ENCODE measurements at regions of chr9 and their contacts with region 1.

Region 1: GRCh38 chr9:97598461-97599288 is 34.5 kb downstream of the TSTD2 start:
- DNase-seq: peak; percentile 61
- ATAC-seq: peak; percentile 98
- H3K4me3 ChIP-seq: 0 out of 2 replicates have a peak overlapping the region, but pooled peaks have one; percentile 15
- H3K27ac ChIP-seq: no peak overlapping the region
- H3K4me1 ChIP-seq: peaks cover 7% of the 10 kb centered on the region; the same call in 1 of the 2 replicates
- H3K27me3 ChIP-seq: no peaks in the 10 kb centered on the region
- CTCF ChIP-seq: peak; percentile 77 to 94 (median 88)
- EP300 ChIP-seq: no peak
- POLR2A ChIP-seq: no peak
- RAD21 ChIP-seq: peak; percentile 86

Region 2: DNA sequence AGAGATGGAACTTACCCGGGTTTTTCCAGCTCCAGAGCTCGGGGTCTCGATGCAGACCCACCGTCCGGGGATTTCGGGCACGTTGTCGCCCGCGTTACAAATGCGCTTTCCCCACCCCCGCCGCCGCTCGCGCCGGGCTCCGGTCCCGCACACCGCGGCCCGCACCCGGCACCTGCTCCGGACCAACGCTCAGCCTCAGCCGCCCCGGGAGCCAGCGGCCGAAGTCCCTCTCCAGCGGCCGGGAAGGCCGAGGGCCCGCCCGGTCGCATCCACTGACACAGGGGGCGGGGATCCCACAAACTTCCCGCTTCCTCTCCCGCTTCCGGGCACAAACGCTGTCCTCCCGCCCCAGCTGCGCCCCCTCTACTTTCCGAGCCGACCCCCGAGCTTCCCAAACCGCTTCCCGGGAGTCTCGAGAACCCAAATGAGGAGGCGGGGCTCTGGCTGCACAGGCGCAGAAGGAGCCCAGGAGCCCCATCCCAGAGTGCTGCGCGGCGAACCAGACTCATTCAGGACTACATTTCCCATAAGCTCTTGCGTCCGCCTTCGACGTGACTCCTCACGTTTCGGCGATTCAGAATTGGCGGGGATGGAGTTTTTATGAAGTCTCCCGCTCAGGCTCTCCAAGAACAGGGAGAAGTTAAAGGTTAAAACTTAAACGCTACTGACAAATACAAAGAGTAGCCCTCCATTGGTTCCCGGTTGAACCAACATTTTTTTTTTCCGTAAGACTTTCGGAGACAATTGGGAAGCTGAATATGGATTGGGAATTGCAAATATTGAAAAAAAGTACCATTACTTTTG is 744.4 kb before region 1 on chr9 and contains the start of gene ZNF782:
- CTCF ChIA-PET with region 1: interaction called, 16 read pairs
- POLR2A ChIA-PET with region 1: no interaction called
- RAD21 ChIA-PET with region 1: interaction called, 7 read pairs
- SMC1A ChIA-PET with region 1: interaction called, 4 read pairs
- in situ Hi-C with region 1: loop called (anchors 25 kb)
- intact Hi-C with region 1: loop called (anchors 5 kb)
- DNase-seq: peak; percentile 60
- ATAC-seq: peak; percentile 96
- H3K4me3 ChIP-seq: peak within 1 kb of the TSS; percentile 83
- H3K27ac ChIP-seq: peak within 1 kb of the TSS; percentile 45
- H3K4me1 ChIP-seq: 0 out of 2 replicates have a peak, but pooled peaks cover 7% of the 10 kb centered on the region
- H3K27me3 ChIP-seq: no peaks in the 10 kb centered on the region
- CTCF ChIP-seq: no peak
- EP300 ChIP-seq: no peak
- POLR2A ChIP-seq: peak; percentile 58; the same call in 1 of the 2 replicates
- RAD21 ChIP-seq: no peak
- polyA plus RNA-seq, gene ZNF782: 0.55 to 0.82 TPM

Region 3: DNA sequence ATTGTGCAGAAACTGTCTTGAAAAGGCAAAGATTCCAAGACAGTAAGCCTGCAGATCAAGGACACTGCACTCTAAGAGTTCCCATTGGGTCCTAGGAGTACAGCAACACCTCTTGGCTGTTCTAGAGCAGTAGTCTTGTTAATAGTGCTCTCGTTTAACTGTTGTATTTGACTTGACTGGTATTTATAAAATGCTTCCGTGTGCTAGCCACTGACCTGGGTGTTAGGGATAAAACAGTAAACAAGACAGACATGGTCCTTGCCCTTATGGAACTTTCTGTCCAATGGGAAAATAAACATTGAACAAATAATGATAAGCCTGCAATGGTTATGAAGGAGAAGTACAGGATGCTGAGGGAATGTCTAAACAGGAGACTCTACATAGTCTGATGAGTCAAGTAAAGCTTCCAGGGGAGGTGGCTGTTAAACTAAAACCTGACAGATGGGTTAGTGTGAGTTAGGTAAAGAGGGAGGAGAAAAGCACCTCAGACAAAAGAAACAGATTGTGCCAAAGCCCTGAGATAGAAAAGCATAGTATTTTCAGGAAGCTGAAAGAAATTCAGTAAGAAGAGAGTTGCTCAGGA is 153.5 kb before region 1 on chr9:
- CTCF ChIA-PET with region 1: interaction called, 11 read pairs
- POLR2A ChIA-PET with region 1: no interaction called
- RAD21 ChIA-PET with region 1: interaction called, 3 read pairs
- SMC1A ChIA-PET with region 1: interaction called, 5 read pairs
- in situ Hi-C with region 1: no loop called
- intact Hi-C with region 1: no loop called
- DNase-seq: no peak
- ATAC-seq: no peak
- H3K4me3 ChIP-seq: no peak overlapping the region
- H3K27ac ChIP-seq: no peak overlapping the region
- H3K4me1 ChIP-seq: no peaks in the 10 kb centered on the region
- H3K27me3 ChIP-seq: no peaks in the 10 kb centered on the region
- CTCF ChIP-seq: no peak
- EP300 ChIP-seq: no peak
- POLR2A ChIP-seq: no peak
- RAD21 ChIP-seq: no peak

Region 4: GRCh38 chr9:97480749-97481148 is 117.9 kb before region 1 on chr9:
- CTCF ChIA-PET with region 1: interaction called, 23 read pairs
- POLR2A ChIA-PET with region 1: no interaction called
- RAD21 ChIA-PET with region 1: interaction called, 5 read pairs
- SMC1A ChIA-PET with region 1: interaction called, 377 read pairs
- in situ Hi-C with region 1: no loop called
- intact Hi-C with region 1: no loop called
- DNase-seq: no peak
- ATAC-seq: no peak
- H3K4me3 ChIP-seq: no peak overlapping the region
- H3K27ac ChIP-seq: no peak overlapping the region
- H3K4me1 ChIP-seq: no peaks in the 10 kb centered on the region
- H3K27me3 ChIP-seq: no peaks in the 10 kb centered on the region
- CTCF ChIP-seq: no peak
- EP300 ChIP-seq: no peak
- POLR2A ChIP-seq: no peak
- RAD21 ChIP-seq: no peak

Region 5: DNA sequence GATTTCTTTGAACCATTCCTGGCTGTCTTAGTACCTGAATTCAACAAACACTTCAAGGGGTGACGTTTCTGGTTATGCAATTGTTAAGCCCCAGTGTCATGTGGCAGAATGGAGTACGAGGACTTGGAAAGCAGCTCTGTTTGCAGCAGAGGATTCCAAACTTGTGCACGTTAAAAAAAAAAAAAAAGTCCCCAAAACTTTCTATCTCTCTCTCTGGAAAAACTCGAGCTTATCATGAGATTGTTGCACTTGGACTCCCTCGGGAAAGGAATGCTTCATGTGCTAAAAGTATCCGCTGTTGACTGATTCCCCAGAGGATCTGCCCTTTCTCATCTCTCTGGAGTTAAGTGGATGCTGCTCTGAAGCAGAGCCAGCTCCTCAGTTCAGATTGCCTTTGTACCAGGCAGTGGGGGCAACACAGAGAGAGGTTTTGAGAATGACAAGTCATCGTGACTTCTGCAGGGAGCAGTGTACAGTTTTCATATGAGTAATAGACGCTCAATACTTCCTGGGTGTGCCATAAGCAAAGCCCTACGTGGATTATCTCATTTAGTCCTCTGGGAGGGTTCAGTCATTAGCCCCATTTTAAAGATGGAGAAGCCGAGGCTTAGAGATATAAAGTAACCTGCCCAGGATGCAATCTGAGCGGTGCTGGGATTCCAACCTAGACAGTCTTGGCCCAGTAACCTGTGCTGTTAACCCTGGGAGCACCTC is 69.2 kb before region 1 on chr9:
- CTCF ChIA-PET with region 1: interaction called, 21 read pairs
- POLR2A ChIA-PET with region 1: interaction called, 5 read pairs
- RAD21 ChIA-PET with region 1: interaction called, 4 read pairs
- SMC1A ChIA-PET with region 1: interaction called, 17 read pairs
- in situ Hi-C with region 1: no loop called
- intact Hi-C with region 1: loop called (anchors 2 kb)
- DNase-seq: peak; percentile 78
- ATAC-seq: peak; percentile 94
- H3K4me3 ChIP-seq: no peak overlapping the region; the same call in 1 of the 2 replicates
- H3K27ac ChIP-seq: peak overlapping the region; percentile 64
- H3K4me1 ChIP-seq: peaks cover 29% of the 10 kb centered on the region
- H3K27me3 ChIP-seq: no peaks in the 10 kb centered on the region
- CTCF ChIP-seq: no peak
- EP300 ChIP-seq: no peak; a peak in 1 of 4 replicates
- POLR2A ChIP-seq: 0 out of 2 replicates have a peak, but pooled peaks have one; percentile 27
- RAD21 ChIP-seq: no peak

Region 6: GRCh38 chr9:97575673-97576200 is 22.9 kb before region 1 on chr9:
- CTCF ChIA-PET with region 1: interaction called, 11 read pairs
- POLR2A ChIA-PET with region 1: no interaction called
- RAD21 ChIA-PET with region 1: interaction called, 7 read pairs
- SMC1A ChIA-PET with region 1: interaction called, 3 read pairs
- in situ Hi-C with region 1: no loop called
- intact Hi-C with region 1: no loop called
- DNase-seq: no peak
- ATAC-seq: no peak
- H3K4me3 ChIP-seq: no peak overlapping the region
- H3K27ac ChIP-seq: no peak overlapping the region
- H3K4me1 ChIP-seq: no peaks in the 10 kb centered on the region
- H3K27me3 ChIP-seq: no peaks in the 10 kb centered on the region
- CTCF ChIP-seq: no peak
- EP300 ChIP-seq: no peak
- POLR2A ChIP-seq: no peak
- RAD21 ChIP-seq: no peak

Region 7: GRCh38 chr9:97900738-97901565 is 302.3 kb after region 1 on chr9:
- CTCF ChIA-PET with region 1: no interaction called
- POLR2A ChIA-PET with region 1: no interaction called
- RAD21 ChIA-PET with region 1: no interaction called
- SMC1A ChIA-PET with region 1: no interaction called
- in situ Hi-C with region 1: no loop called
- intact Hi-C with region 1: no loop called
- DNase-seq: no peak
- ATAC-seq: peak; percentile 61
- H3K4me3 ChIP-seq: no peak overlapping the region
- H3K27ac ChIP-seq: no peak overlapping the region
- H3K4me1 ChIP-seq: peaks cover 5% of the 10 kb centered on the region; the same call in 1 of the 2 replicates
- H3K27me3 ChIP-seq: no peaks in the 10 kb centered on the region
- CTCF ChIP-seq: peak; percentile 76 to 79 (median 78)
- EP300 ChIP-seq: no peak
- POLR2A ChIP-seq: no peak
- RAD21 ChIP-seq: peak; percentile 76

Region 8: GRCh38 chr9:98241357-98242300 is 643.0 kb after region 1 on chr9:
- CTCF ChIA-PET with region 1: no interaction called
- POLR2A ChIA-PET with region 1: no interaction called
- RAD21 ChIA-PET with region 1: no interaction called
- SMC1A ChIA-PET with region 1: no interaction called
- in situ Hi-C with region 1: no loop called
- intact Hi-C with region 1: no loop called
- DNase-seq: no peak
- ATAC-seq: no peak
- H3K4me3 ChIP-seq: no peak overlapping the region
- H3K27ac ChIP-seq: no peak overlapping the region
- H3K4me1 ChIP-seq: no peaks in the 10 kb centered on the region
- H3K27me3 ChIP-seq: no peaks in the 10 kb centered on the region
- CTCF ChIP-seq: no peak
- EP300 ChIP-seq: no peak
- POLR2A ChIP-seq: no peak
- RAD21 ChIP-seq: no peak